Caco-2 (cell line): ENCODE measurements at regions of chr20 and their contacts with region 1.

Region 1: GRCh38 chr20:57266291-57267157 is at the start of gene BMP7:
- DNase-seq: peak; percentile 79 to 84
- H3K4me3 ChIP-seq: peak within 1 kb of the TSS; percentile 94
- H3K4me3 Mint-ChIP-seq: peak within 1 kb of the TSS; percentile 93
- H3K27ac Mint-ChIP-seq: peak within 1 kb of the TSS; percentile 72
- H3K4me1 ChIP-seq: peaks cover 48% of the 10 kb centered on the region
- H3K4me1 Mint-ChIP-seq: peaks cover 61% of the 10 kb centered on the region
- H3K27me3 ChIP-seq: no peaks in the 10 kb centered on the region
- H3K27me3 Mint-ChIP-seq: no peaks in the 10 kb centered on the region
- CTCF ChIP-seq: no peak
- total RNA-seq, gene BMP7: 266 and 317 TPM in 2 replicates

Region 2: GRCh38 chr20:57089691-57090150 is 176.8 kb before region 1 on chr20:
- CTCF ChIA-PET with region 1: no interaction called
- POLR2A ChIA-PET with region 1: no interaction called
- intact Hi-C with region 1: loop called (anchors 2 kb)
- DNase-seq: peak; percentile 92 to 97
- H3K4me3 ChIP-seq: no peak overlapping the region
- H3K4me3 Mint-ChIP-seq: no peak overlapping the region
- H3K27ac Mint-ChIP-seq: peak overlapping the region; percentile 1
- H3K4me1 ChIP-seq: peaks cover 7% of the 10 kb centered on the region
- H3K4me1 Mint-ChIP-seq: peaks cover 18% of the 10 kb centered on the region
- H3K27me3 ChIP-seq: no peaks in the 10 kb centered on the region
- H3K27me3 Mint-ChIP-seq: peaks cover 4% of the 10 kb centered on the region
- CTCF ChIP-seq: peak; percentile 100

Region 3: GRCh38 chr20:57108732-57109573 is 157.6 kb before region 1 on chr20:
- CTCF ChIA-PET with region 1: no interaction called
- POLR2A ChIA-PET with region 1: no interaction called
- intact Hi-C with region 1: no loop called
- DNase-seq: peak; percentile 42 to 67
- H3K4me3 ChIP-seq: no peak overlapping the region
- H3K4me3 Mint-ChIP-seq: no peak overlapping the region
- H3K27ac Mint-ChIP-seq: no peak overlapping the region
- H3K4me1 ChIP-seq: peaks cover 16% of the 10 kb centered on the region
- H3K4me1 Mint-ChIP-seq: peaks cover 6% of the 10 kb centered on the region
- H3K27me3 ChIP-seq: no peaks in the 10 kb centered on the region
- H3K27me3 Mint-ChIP-seq: peaks cover 4% of the 10 kb centered on the region
- CTCF ChIP-seq: peak; percentile 16 to 22

Region 4: DNA sequence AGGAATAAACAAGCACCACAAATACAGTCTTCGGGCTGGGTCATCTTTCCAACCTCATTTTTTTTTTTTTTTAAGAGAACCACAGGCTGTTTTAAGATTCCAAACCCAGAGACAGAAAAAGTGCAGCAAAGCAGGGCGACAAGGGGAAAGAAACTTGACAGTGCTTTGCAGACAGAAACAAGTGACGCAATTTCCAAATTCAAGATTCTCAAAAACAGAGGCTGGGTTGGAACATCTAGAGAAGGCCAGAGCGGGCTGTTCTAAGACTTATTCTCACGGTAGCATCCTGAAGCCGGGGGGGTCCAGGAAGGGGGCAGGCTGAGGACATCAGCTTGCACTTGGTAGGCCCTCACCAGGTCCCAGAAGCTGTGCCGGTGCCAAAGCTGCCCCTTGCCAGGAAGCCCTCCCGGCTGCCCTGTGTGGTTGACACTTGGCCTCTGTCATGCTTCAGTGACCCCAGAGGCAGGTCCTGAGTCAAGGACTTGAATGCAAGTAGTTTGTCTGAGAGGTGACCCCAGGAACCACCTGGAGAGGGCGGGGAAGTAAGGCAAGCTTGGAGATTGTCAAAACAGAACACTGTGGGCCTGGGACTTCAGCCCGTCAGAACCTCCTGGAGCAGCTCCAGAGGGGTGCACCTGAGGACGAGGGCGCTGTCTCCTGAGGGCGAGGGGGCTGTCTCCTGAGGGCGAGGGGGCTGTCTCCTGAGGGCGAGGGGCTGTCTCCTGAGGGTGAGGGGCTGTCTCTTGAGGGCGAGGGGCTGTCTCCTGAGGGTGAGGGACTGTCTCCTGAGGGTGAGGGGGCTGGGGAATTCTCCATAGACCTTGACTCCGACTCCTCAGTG is 50.5 kb before region 1 on chr20:
- CTCF ChIA-PET with region 1: no interaction called
- POLR2A ChIA-PET with region 1: no interaction called
- intact Hi-C with region 1: no loop called
- DNase-seq: no peak
- H3K4me3 ChIP-seq: no peak overlapping the region
- H3K4me3 Mint-ChIP-seq: no peak overlapping the region
- H3K27ac Mint-ChIP-seq: no peak overlapping the region
- H3K4me1 ChIP-seq: peaks cover 13% of the 10 kb centered on the region
- H3K4me1 Mint-ChIP-seq: peaks cover 7% of the 10 kb centered on the region
- H3K27me3 ChIP-seq: no peaks in the 10 kb centered on the region
- H3K27me3 Mint-ChIP-seq: no peaks in the 10 kb centered on the region
- CTCF ChIP-seq: no peak

Region 5: GRCh38 chr20:57231951-57232428 is 34.5 kb before region 1 on chr20:
- CTCF ChIA-PET with region 1: no interaction called
- POLR2A ChIA-PET with region 1: no interaction called
- intact Hi-C with region 1: no loop called
- DNase-seq: no peak
- H3K4me3 ChIP-seq: no peak overlapping the region
- H3K4me3 Mint-ChIP-seq: no peak overlapping the region
- H3K27ac Mint-ChIP-seq: no peak overlapping the region
- H3K4me1 ChIP-seq: peaks cover 10% of the 10 kb centered on the region
- H3K4me1 Mint-ChIP-seq: peaks cover 41% of the 10 kb centered on the region
- H3K27me3 ChIP-seq: no peaks in the 10 kb centered on the region
- H3K27me3 Mint-ChIP-seq: no peaks in the 10 kb centered on the region
- CTCF ChIP-seq: no peak

Region 6: GRCh38 chr20:57244627-57245214 is 21.8 kb before region 1 on chr20:
- CTCF ChIA-PET with region 1: interaction called, 15 read pairs
- POLR2A ChIA-PET with region 1: interaction called, 3 read pairs
- intact Hi-C with region 1: loop called (anchors 1 kb)
- DNase-seq: peak; percentile 74 to 80
- H3K4me3 ChIP-seq: no peak overlapping the region
- H3K4me3 Mint-ChIP-seq: no peak overlapping the region
- H3K27ac Mint-ChIP-seq: peak overlapping the region; percentile 53
- H3K4me1 ChIP-seq: peaks cover 20% of the 10 kb centered on the region
- H3K4me1 Mint-ChIP-seq: peaks cover 29% of the 10 kb centered on the region
- H3K27me3 ChIP-seq: no peaks in the 10 kb centered on the region
- H3K27me3 Mint-ChIP-seq: no peaks in the 10 kb centered on the region
- CTCF ChIP-seq: peak; percentile 60 to 83

Region 7: GRCh38 chr20:57252559-57253162 is 13.9 kb before region 1 on chr20:
- CTCF ChIA-PET with region 1: interaction called, 8 read pairs
- POLR2A ChIA-PET with region 1: interaction called, 3 read pairs
- intact Hi-C with region 1: loop called (anchors 1 kb)
- DNase-seq: no peak
- H3K4me3 ChIP-seq: no peak overlapping the region
- H3K4me3 Mint-ChIP-seq: no peak overlapping the region
- H3K27ac Mint-ChIP-seq: peak overlapping the region; percentile 55
- H3K4me1 ChIP-seq: peaks cover 17% of the 10 kb centered on the region
- H3K4me1 Mint-ChIP-seq: peaks cover 55% of the 10 kb centered on the region
- H3K27me3 ChIP-seq: no peaks in the 10 kb centered on the region
- H3K27me3 Mint-ChIP-seq: no peaks in the 10 kb centered on the region
- CTCF ChIP-seq: no peak

Region 8: GRCh38 chr20:57290749-57291402 is 24.4 kb after region 1 on chr20:
- CTCF ChIA-PET with region 1: interaction called, 5 read pairs
- POLR2A ChIA-PET with region 1: interaction called, 18 read pairs
- intact Hi-C with region 1: loop called (anchors 1 kb)
- DNase-seq: peak in 1 of 2 experiments; percentile 66
- H3K4me3 ChIP-seq: no peak overlapping the region
- H3K4me3 Mint-ChIP-seq: no peak overlapping the region
- H3K27ac Mint-ChIP-seq: peak overlapping the region; percentile 28
- H3K4me1 ChIP-seq: peaks cover 91% of the 10 kb centered on the region
- H3K4me1 Mint-ChIP-seq: peaks cover 76% of the 10 kb centered on the region
- H3K27me3 ChIP-seq: no peaks in the 10 kb centered on the region
- H3K27me3 Mint-ChIP-seq: no peaks in the 10 kb centered on the region
- CTCF ChIP-seq: peak; percentile 51 to 74

Region 9: DNA sequence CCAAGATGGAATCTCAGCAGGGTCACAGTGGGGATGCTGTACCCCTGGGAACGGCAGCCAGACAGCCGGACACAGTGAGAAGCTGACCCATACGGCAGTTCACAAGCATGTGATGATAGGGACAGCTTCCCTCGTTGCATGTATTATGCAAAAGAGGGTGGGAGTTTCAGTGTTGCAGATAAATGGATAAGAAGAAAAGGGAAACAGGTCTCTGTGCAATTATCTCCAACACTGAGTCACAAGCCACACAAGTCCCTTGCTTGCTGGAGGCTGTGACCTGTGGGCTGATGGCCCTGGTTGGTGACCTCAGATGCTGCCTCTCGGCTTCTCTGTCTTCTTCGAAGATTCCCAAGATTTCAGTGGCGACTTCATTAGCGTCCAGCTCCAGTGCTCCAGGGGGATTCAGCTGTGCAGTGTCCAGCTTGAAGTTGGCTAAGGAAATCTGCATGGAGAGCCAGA is 42.3 kb after region 1 on chr20:
- CTCF ChIA-PET with region 1: interaction called, 10 read pairs
- POLR2A ChIA-PET with region 1: interaction called, 7 read pairs
- intact Hi-C with region 1: loop called (anchors 1 kb)
- DNase-seq: peak; percentile 67 to 77
- H3K4me3 ChIP-seq: no peak overlapping the region
- H3K4me3 Mint-ChIP-seq: no peak overlapping the region
- H3K27ac Mint-ChIP-seq: peak overlapping the region; percentile 76
- H3K4me1 ChIP-seq: peaks cover 66% of the 10 kb centered on the region
- H3K4me1 Mint-ChIP-seq: peaks cover 38% of the 10 kb centered on the region
- H3K27me3 ChIP-seq: no peaks in the 10 kb centered on the region
- H3K27me3 Mint-ChIP-seq: no peaks in the 10 kb centered on the region
- CTCF ChIP-seq: no peak

Region 10: GRCh38 chr20:57724619-57725405 is 458.3 kb after region 1 on chr20:
- CTCF ChIA-PET with region 1: no interaction called
- POLR2A ChIA-PET with region 1: no interaction called
- intact Hi-C with region 1: no loop called
- DNase-seq: no peak
- H3K4me3 ChIP-seq: no peak overlapping the region
- H3K4me3 Mint-ChIP-seq: no peak overlapping the region
- H3K27ac Mint-ChIP-seq: no peak overlapping the region
- H3K4me1 ChIP-seq: no peaks in the 10 kb centered on the region
- H3K4me1 Mint-ChIP-seq: no peaks in the 10 kb centered on the region
- H3K27me3 ChIP-seq: peaks cover 2% of the 10 kb centered on the region
- H3K27me3 Mint-ChIP-seq: peaks cover 26% of the 10 kb centered on the region
- CTCF ChIP-seq: no peak